ENCODE measurements at regions of chr12 and their contacts with region 1.

Region 1: GRCh38 chr12:107448198-107448597 is 237.4 kb upstream of the PWP1 start:
- DNase-seq: no peak
- H3K4me3 ChIP-seq: no peak overlapping the region
- CTCF ChIP-seq: peak; percentile 36

Region 2: GRCh38 chr12:107436376-107436775 is 11.8 kb before region 1 on chr12:
- CTCF ChIA-PET with region 1: interaction called, 26 read pairs
- POLR2A ChIA-PET with region 1: no interaction called
- DNase-seq: peak; percentile 51
- H3K4me3 ChIP-seq: no peak overlapping the region
- CTCF ChIP-seq: no peak